ENCODE measurements at regions of chr2 and their contacts with region 1.

Region 1: GRCh38 chr2:8681786-8682692 is at the start of gene ID2:
- DNase-seq: peak; percentile 97 to 99 (median 98)
- ATAC-seq: peak; percentile 75
- H3K4me3 ChIP-seq: peak within 1 kb of the TSS; percentile 68
- H3K27ac ChIP-seq: peak within 1 kb of the TSS; percentile 56; the same call in 2 of the 3 replicates
- H3K4me1 ChIP-seq: peaks cover 34 to 47% of the 10 kb centered on the region in 2 experiments
- H3K27me3 ChIP-seq: no peaks in the 10 kb centered on the region
- CTCF ChIP-seq: 0 out of 6 replicates have a peak, but pooled peaks of 1 of the 3 experiments have one; percentile 3
- EP300 ChIP-seq: 0 out of 2 replicates have a peak, but pooled peaks have one; percentile 5
- POLR2A ChIP-seq: peak; percentile 99
- RAD21 ChIP-seq: peak in 1 of 2 experiments; percentile 32; a peak in 2 of 4 replicates
- polyA plus RNA-seq, gene ID2: 17.4 to 23.1 TPM

Region 2: DNA sequence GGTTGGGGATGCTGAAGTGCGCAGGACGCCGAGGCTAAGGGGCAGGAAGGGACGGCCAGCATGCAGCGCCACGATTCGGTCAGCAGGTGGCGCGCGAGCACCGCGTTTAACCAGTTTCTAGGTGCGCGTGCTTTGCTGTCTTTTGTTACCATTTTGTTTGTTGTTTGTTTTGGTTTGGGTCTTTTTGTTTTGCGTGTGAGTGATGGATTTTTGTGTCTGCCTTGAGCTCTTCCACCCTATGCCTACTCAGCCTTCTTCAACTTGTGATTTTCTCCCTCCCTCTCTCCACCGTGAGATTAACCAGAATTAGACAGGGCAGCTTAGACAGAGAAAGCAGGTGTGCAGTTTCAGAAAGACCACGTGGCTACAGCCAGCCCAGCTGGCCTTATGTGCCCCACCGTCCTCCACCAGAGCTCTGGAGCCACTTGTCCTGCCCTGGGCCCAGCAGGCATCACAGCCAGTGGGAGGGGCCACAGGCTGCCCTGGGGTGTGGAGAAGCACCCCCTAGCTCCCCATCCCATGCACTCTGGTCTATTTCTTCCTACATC is 1584.6 kb before region 1 on chr2:
- CTCF ChIA-PET with region 1: interaction called, 3 read pairs
- POLR2A ChIA-PET with region 1: no interaction called
- in situ Hi-C with region 1: loop called (anchors 25 kb)
- intact Hi-C with region 1: loop called (anchors 10 kb)
- DNase-seq: peak; percentile 72 to 82 (median 80)
- ATAC-seq: peak; percentile 98
- H3K4me3 ChIP-seq: no peak overlapping the region
- H3K27ac ChIP-seq: no peak overlapping the region
- H3K4me1 ChIP-seq: peaks cover 0 to 3% of the 10 kb centered on the region in 2 experiments; a peak in 2 of 5 replicates
- H3K27me3 ChIP-seq: peaks cover 6 to 36% of the 10 kb centered on the region in 2 experiments
- CTCF ChIP-seq: peak; percentile 83 to 95 (median 91)
- EP300 ChIP-seq: no peak
- POLR2A ChIP-seq: no peak
- RAD21 ChIP-seq: peak; percentile 75 to 83

Region 3: GRCh38 chr2:8004250-8004681 is 677.8 kb before region 1 on chr2:
- CTCF ChIA-PET with region 1: no interaction called
- POLR2A ChIA-PET with region 1: no interaction called
- in situ Hi-C with region 1: loop called (anchors 25 kb)
- intact Hi-C with region 1: loop called (anchors 5 kb)
- DNase-seq: peak; percentile 80 to 93 (median 86)
- ATAC-seq: peak; percentile 82
- H3K4me3 ChIP-seq: no peak overlapping the region
- H3K27ac ChIP-seq: peak overlapping the region; percentile 58
- H3K4me1 ChIP-seq: peaks cover 9 to 22% of the 10 kb centered on the region in 2 experiments; a peak in 4 of 5 replicates
- H3K27me3 ChIP-seq: no peaks in the 10 kb centered on the region
- CTCF ChIP-seq: no peak
- EP300 ChIP-seq: peak; percentile 96
- POLR2A ChIP-seq: no peak
- RAD21 ChIP-seq: no peak; a peak in 1 of 4 replicates

Region 4: GRCh38 chr2:8525582-8526402 is 156.2 kb before region 1 on chr2:
- CTCF ChIA-PET with region 1: interaction called, 41 read pairs
- POLR2A ChIA-PET with region 1: interaction called, 42 read pairs
- in situ Hi-C with region 1: loop called (anchors 5 kb)
- intact Hi-C with region 1: loop called (anchors 1 kb)
- DNase-seq: peak; percentile 94 to 97 (median 95)
- ATAC-seq: peak; percentile 96
- H3K4me3 ChIP-seq: no peak overlapping the region
- H3K27ac ChIP-seq: peak overlapping the region; percentile 79
- H3K4me1 ChIP-seq: peaks cover 20 to 24% of the 10 kb centered on the region in 2 experiments
- H3K27me3 ChIP-seq: no peaks in the 10 kb centered on the region; a peak in 1 of 5 replicates
- CTCF ChIP-seq: peak; percentile 87 to 96 (median 90)
- EP300 ChIP-seq: peak; percentile 91
- POLR2A ChIP-seq: no peak
- RAD21 ChIP-seq: peak; percentile 97 to 99

Region 5: DNA sequence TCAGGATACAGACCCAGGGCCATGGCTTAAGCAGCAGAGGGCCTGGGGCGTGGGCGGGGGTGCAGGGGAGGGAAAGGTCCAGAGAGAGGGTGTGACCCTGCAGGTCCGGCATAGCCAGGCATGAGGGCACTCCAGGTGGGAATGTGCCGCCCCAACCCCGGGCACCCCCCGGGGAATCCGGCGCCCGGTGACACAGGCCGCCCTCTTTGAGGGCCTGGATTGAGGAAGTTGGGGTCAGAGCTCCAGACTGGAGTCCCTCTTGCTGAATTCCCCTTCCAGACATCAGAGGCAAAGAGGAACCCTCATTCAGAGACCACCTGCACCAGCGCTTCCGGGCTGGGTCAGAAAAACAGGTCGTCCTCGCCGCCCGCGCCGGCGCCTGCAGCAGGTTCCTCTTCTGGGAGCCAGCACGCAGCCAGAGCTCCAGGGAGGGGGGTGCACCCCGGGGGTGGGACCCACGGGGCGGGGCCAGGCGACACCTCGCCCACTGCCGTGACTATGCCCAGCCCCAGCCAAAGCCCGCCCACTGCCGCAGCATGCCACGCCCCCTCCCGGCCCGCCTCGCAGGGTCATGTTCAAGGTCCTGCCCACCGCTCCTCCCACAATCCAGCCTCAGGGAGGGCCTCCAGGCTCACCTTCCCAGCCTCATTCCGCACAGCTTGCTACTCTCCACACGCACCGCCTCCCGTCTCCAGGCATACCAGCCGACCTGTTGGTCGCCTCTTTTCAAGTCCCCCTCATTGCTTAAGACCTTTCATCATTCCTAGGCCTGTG is 98.5 kb before region 1 on chr2:
- CTCF ChIA-PET with region 1: no interaction called
- POLR2A ChIA-PET with region 1: interaction called, 16 read pairs
- in situ Hi-C with region 1: no loop called
- intact Hi-C with region 1: no loop called
- DNase-seq: peak; percentile 97 to 99 (median 99)
- ATAC-seq: peak; percentile 99
- H3K4me3 ChIP-seq: no peak overlapping the region
- H3K27ac ChIP-seq: peak overlapping the region; percentile 49; the same call in 1 of the 3 replicates
- H3K4me1 ChIP-seq: peaks cover 19 to 47% of the 10 kb centered on the region in 2 experiments
- H3K27me3 ChIP-seq: peaks cover 3 to 31% of the 10 kb centered on the region in 2 experiments; a peak in 3 of 5 replicates
- CTCF ChIP-seq: no peak
- EP300 ChIP-seq: no peak
- POLR2A ChIP-seq: peak; percentile 62; the same call in 1 of the 2 replicates
- RAD21 ChIP-seq: no peak

Region 6: GRCh38 chr2:8662239-8662895 is 19.7 kb before region 1 on chr2:
- CTCF ChIA-PET with region 1: no interaction called
- POLR2A ChIA-PET with region 1: interaction called, 20 read pairs
- in situ Hi-C with region 1: no loop called
- intact Hi-C with region 1: no loop called
- DNase-seq: peak in 3 of 4 experiments; percentile 31 to 59 (median 59)
- ATAC-seq: peak; percentile 65
- H3K4me3 ChIP-seq: no peak overlapping the region
- H3K27ac ChIP-seq: no peak overlapping the region
- H3K4me1 ChIP-seq: peaks cover 11 to 30% of the 10 kb centered on the region in 2 experiments
- H3K27me3 ChIP-seq: no peaks in the 10 kb centered on the region
- CTCF ChIP-seq: peak in 1 of 3 experiments; percentile 25; a peak in 2 of 6 replicates
- EP300 ChIP-seq: no peak
- POLR2A ChIP-seq: no peak
- RAD21 ChIP-seq: peak in 1 of 2 experiments; percentile 30; a peak in 2 of 4 replicates

Region 7: GRCh38 chr2:9010866-9011265 is 328.8 kb after region 1 on chr2:
- CTCF ChIA-PET with region 1: no interaction called
- POLR2A ChIA-PET with region 1: no interaction called
- in situ Hi-C with region 1: no loop called
- intact Hi-C with region 1: no loop called
- DNase-seq: no peak
- ATAC-seq: no peak
- H3K4me3 ChIP-seq: no peak overlapping the region
- H3K27ac ChIP-seq: no peak overlapping the region
- H3K4me1 ChIP-seq: no peaks in the 10 kb centered on the region
- H3K27me3 ChIP-seq: no peaks in the 10 kb centered on the region
- CTCF ChIP-seq: no peak
- EP300 ChIP-seq: no peak
- POLR2A ChIP-seq: no peak
- RAD21 ChIP-seq: no peak

Measured in K562 (cell line).